Activated CD8-positive, alpha-beta memory T cell treated with anti-CD3 and anti-CD28 coated beads, Interleukin-2, amount 10 ng/mL, durations not matched to agents 7 days and 5 days (primary cell): ENCODE measurements at regions of chr10 and their contacts with region 1.

Region 1: GRCh38 chr10:44864637-44865288 is 46.4 kb upstream of the TMEM72 start:
- DNase-seq: peak; percentile 81
- ATAC-seq: peak; percentile 90
- H3K4me3 Mint-ChIP-seq: peak overlapping the region; percentile 76
- H3K27ac Mint-ChIP-seq: no peak overlapping the region
- H3K4me1 Mint-ChIP-seq: peaks cover 11% of the 10 kb centered on the region
- H3K27me3 Mint-ChIP-seq: peaks cover 55% of the 10 kb centered on the region

Region 2: DNA sequence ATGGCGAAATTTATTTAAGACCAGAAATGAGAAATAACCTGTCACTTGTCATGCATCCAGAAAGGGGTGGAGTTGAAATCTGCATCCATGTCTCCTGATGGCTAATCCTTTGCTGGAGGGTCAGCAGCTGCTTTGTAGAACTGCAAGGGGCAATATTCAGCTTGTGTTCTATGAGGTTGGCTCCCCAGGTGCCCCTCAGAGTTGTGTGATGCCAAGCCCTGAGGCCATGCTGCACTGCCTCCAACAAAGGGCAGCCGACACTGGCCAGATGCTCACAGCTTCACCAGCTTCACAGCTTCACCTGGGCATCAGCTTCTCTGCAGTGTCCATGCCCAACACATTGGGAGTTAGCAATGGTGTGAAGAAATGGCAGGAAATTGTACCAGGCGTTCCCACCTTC is 17.7 kb before region 1 on chr10:
- CTCF ChIA-PET with region 1: no interaction called
- DNase-seq: no peak
- ATAC-seq: no peak
- H3K4me3 Mint-ChIP-seq: no peak overlapping the region
- H3K27ac Mint-ChIP-seq: no peak overlapping the region
- H3K4me1 Mint-ChIP-seq: no peaks in the 10 kb centered on the region
- H3K27me3 Mint-ChIP-seq: no peaks in the 10 kb centered on the region

Region 3: DNA sequence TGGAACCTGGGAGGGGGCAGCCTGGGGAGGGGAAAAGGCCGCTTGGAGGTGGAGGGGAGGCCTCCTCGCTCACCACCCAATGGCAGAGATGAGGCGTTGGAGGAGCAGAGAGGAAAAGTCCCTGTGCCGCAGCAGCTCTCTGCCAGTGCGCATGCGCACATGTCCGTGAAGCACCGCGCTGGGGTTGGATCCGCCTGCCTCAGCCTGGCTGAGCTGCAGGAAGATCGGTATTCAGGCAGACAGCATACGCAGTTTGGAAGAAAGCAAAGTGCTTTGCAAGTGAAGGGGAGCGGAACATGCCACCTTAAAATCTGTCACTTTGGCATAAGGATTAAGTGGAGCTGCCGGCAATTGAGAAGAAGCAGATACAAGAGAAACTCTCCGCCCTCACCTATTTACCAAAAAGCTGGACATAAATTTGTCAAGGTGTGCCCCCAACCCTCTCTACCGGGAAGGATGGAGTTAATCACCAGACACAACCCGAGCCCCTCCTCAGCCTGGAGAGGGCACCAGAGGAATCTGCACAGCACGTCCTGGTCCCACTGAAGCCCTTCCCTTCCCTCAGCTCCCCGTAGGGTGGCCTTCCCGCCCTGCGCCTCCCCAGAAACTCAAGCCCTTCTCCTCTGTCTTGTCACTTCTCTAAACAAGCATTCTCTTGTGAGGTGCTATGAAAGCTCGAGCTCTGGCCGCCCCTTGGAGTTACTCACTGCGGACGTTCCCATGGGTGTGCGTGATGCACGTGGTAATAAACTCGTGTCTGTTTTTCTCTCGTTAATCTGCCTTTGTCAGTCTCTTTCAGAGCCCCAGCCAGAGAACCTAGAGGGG is 14.2 kb after region 1 on chr10:
- CTCF ChIA-PET with region 1: interaction called, 12 read pairs
- DNase-seq: peak; percentile 75
- ATAC-seq: peak; percentile 79
- H3K4me3 Mint-ChIP-seq: peak overlapping the region; percentile 63
- H3K27ac Mint-ChIP-seq: no peak overlapping the region
- H3K4me1 Mint-ChIP-seq: peaks cover 14% of the 10 kb centered on the region
- H3K27me3 Mint-ChIP-seq: peaks cover 19% of the 10 kb centered on the region

Region 4: DNA sequence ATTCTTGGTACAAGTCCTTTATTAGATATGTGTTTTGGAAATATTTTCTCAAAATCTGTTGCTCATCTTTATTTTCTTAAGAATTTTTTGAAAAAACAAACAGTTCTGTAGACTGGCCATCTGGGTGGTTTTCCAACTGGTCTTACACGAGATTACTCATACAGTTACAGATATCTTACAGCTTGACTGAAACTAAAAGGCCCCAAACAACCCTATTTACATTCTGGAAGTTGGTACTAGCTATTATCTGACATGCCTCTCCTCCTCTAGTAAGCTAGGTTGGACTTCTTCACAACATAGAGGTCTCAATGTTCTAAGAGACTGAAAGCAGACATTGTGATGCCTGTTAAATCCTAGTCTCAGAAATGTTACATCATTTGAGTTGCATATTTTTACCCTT is 187.9 kb after region 1 on chr10:
- CTCF ChIA-PET with region 1: no interaction called
- DNase-seq: no peak
- ATAC-seq: no peak
- H3K4me3 Mint-ChIP-seq: no peak overlapping the region
- H3K27ac Mint-ChIP-seq: no peak overlapping the region
- H3K4me1 Mint-ChIP-seq: no peaks in the 10 kb centered on the region
- H3K27me3 Mint-ChIP-seq: peaks cover 14% of the 10 kb centered on the region